HEK293 (cell line): ENCODE measurements at regions of chr5 and their contacts with region 1.

Region 1: DNA sequence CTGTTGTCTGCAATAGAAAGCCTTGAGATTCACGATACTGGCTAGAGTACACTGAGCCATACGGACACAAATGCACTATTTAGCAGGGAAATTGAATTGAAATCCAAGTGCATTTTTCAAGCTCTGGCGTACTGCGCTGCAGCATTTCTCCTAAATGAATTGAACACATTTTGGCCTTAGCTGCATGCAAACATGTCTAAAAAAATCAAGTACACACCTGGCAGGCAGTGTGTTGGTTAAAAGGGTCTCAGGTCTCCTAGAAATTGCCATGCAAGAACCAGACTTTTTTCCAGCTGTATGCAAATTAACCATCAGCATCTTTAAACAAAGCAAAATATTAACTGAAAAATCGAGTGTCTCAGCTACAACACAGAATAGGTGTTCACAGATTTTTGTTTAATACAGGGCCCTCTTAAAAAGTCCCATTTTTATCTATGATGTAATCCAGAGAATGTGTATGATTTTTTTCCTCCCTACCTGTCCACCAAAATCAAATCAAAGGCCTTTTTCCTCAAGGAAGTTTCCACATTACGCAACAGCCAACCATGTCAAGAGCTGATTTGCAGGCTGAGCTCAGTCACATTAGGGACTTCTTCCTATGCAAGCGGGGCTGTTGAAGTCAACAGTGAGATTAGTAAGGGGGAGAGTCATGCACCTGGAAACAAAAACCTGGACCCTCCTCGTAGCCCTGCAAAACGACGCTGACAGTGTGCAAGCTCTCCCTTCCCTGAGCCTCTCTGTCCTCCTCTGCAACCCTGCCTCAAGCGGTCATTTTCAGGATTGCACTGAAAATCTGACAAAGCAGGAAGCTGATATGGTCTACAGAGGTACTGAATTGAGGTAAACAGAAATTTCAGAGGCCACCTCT is 14.1 kb upstream of the SFXN1 start:
- H3K4me3 ChIP-seq: no peak overlapping the region
- H3K27ac ChIP-seq: no peak overlapping the region
- H3K4me1 ChIP-seq: no peaks in the 10 kb centered on the region
- CTCF ChIP-seq: peak; percentile 69

Region 2: DNA sequence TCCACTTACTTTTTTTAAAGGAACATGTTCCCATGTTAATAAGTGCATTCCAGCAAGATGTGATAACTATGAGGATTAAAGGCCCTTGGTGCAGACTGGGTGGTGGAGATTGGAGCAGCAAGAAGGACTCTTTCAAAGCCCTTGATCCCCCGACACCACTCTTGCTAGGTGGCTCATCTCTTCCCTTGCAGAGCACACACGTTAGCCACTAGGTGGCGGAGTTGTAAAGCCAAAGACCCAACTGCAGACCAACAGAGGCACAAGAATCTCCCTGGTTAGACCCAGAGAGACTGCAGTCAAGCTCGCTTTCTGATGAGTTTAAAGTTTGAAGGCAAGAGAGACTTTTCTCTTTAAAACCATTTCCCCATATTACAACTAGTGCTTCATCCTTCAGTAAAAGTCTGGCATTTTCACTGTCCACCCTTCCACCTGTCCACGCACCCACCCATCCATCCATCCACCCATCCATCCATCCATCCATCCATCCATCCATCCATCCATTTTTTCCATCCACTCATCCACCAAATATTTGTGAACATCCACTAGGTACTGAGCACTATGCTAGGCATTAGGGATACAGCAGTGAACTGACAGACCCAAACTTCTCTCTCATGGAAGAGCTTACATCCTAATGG is 513.0 kb before region 1 on chr5:
- CTCF ChIA-PET with region 1: interaction called, 26 read pairs
- POLR2A ChIA-PET with region 1: no interaction called
- H3K4me3 ChIP-seq: no peak overlapping the region
- H3K27ac ChIP-seq: no peak overlapping the region
- H3K4me1 ChIP-seq: no peaks in the 10 kb centered on the region
- CTCF ChIP-seq: peak; percentile 80

Region 3: GRCh38 chr5:175444060-175444904 is 20.0 kb before region 1 on chr5 and contains the start of gene DRD1:
- CTCF ChIA-PET with region 1: interaction called, 19 read pairs
- POLR2A ChIA-PET with region 1: no interaction called
- H3K4me3 ChIP-seq: peak within 1 kb of the TSS; percentile 30
- H3K27ac ChIP-seq: peak within 1 kb of the TSS; percentile 56; the same call in 1 of the 2 replicates
- H3K4me1 ChIP-seq: no peaks in the 10 kb centered on the region
- CTCF ChIP-seq: peak; percentile 50; the same call in 1 of the 2 replicates

Region 4: GRCh38 chr5:175478384-175479124 is 14.2 kb after region 1 on chr5 and contains the start of gene SFXN1:
- CTCF ChIA-PET with region 1: interaction called, 36 read pairs
- POLR2A ChIA-PET with region 1: no interaction called
- H3K4me3 ChIP-seq: peak within 1 kb of the TSS; percentile 92
- H3K27ac ChIP-seq: peak within 1 kb of the TSS; percentile 80
- H3K4me1 ChIP-seq: no peaks in the 10 kb centered on the region
- CTCF ChIP-seq: no peak